ENCODE measurements at regions of chr11 and their contacts with region 1.

Region 1: GRCh38 chr11:64553551-64554201 is 37.3 kb upstream of the SLC22A12 start:
- DNase-seq: peak; percentile 64
- H3K4me3 ChIP-seq: no peak overlapping the region
- H3K27ac ChIP-seq: peak overlapping the region; percentile 59
- H3K4me1 ChIP-seq: peaks cover 23% of the 10 kb centered on the region
- H3K27me3 ChIP-seq: peaks cover 16% of the 10 kb centered on the region
- CTCF ChIP-seq: peak; percentile 99

Region 2: GRCh38 chr11:64619811-64620380 is 66.2 kb after region 1 on chr11:
- intact Hi-C with region 1: no loop called
- DNase-seq: no peak
- H3K4me3 ChIP-seq: no peak overlapping the region
- H3K27ac ChIP-seq: no peak overlapping the region
- H3K4me1 ChIP-seq: peaks cover 10% of the 10 kb centered on the region
- H3K27me3 ChIP-seq: no peaks in the 10 kb centered on the region
- CTCF ChIP-seq: no peak

Region 3: GRCh38 chr11:64652586-64653387 is 99.1 kb after region 1 on chr11:
- intact Hi-C with region 1: loop called (anchors 5 kb)
- DNase-seq: peak; percentile 74
- H3K4me3 ChIP-seq: no peak overlapping the region
- H3K27ac ChIP-seq: no peak overlapping the region
- H3K4me1 ChIP-seq: peaks cover 5% of the 10 kb centered on the region
- H3K27me3 ChIP-seq: peaks cover 42% of the 10 kb centered on the region
- CTCF ChIP-seq: peak; percentile 92